ENCODE measurements at regions of chr16 and their contacts with region 1.

Region 1: GRCh38 chr16:20799599-20799998 is 6.7 kb downstream of the ERI2 start:
- DNase-seq: no peak
- H3K4me3 Mint-ChIP-seq: no peak overlapping the region
- H3K27ac Mint-ChIP-seq: no peak overlapping the region
- H3K4me1 Mint-ChIP-seq: peaks cover 14% of the 10 kb centered on the region
- H3K27me3 Mint-ChIP-seq: no peaks in the 10 kb centered on the region

Region 2: DNA sequence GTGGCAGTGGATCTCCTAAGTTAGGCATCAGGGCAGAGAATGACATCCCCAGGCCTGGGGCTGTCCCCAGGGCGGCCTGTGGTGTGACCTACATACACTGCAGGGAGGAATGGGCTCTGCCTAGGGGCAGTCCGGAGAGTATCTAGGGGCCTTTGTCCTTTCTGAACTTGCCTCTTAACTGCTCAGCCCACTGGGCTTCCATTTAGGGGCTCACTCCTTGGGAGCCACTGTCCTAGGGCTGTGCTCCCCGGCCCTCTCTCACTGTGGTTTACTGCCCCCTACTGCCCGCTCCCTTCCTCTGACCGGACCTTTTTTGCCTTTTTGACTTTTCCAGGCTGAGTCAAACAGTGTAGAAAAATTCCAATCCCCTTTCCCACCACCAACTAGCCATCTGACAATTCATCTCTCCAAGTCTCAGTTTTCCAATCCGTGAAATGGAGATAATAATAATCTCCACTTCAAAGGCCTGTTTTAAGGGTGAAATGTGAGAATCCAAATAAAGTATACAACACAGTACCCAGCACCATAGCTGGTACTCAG is 284.2 kb after region 1 on chr16:
- intact Hi-C with region 1: loop called (anchors 1 kb)
- DNase-seq: peak; percentile 33
- H3K4me3 Mint-ChIP-seq: no peak overlapping the region
- H3K27ac Mint-ChIP-seq: no peak overlapping the region
- H3K4me1 Mint-ChIP-seq: no peaks in the 10 kb centered on the region
- H3K27me3 Mint-ChIP-seq: peaks cover 8% of the 10 kb centered on the region